ENCODE measurements at regions of chr7 and their contacts with region 1.

Region 1: DNA sequence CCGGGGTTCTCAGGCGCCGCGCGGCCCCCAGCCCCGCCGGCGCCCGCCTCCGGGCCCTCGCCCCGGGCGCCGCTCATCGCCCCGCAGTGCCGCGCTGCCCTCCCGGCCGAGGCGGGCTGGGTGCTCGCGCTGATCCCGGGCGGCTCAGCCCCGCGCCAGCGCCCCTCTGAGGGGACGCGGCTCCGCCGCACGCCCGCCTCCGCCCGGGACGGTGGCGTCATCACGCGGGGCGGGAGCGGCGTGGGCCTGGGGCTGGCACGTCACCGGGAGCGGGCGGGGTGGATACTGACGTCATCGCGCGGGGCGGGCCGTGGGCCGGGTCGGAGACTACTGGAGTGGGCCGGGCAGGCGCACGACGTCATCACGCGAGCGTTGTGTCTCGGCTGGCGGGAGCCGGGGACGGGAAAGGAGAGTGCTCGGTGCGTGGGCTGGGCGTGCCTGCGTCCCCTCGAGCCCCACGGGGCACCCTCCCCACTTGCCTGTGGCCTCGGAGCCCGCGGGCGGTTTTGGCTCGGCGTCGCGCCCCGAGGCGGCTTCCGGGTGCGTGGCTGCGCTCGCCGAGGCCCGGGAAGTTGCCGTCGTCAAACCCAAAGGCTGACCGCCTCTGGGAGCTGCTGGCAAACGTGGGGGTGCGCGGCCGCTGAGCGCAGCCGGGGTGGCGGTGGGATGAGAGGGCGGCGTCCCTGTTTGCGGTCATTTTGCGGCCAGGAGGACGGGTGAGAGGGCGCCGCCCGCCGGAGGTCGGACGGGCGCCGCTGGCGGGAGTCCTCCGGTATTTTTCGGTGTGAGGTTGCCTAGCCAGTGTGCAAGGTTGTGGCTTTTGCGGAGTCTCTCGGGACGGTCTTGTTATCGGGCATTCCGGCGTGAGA is at the start of gene ESYT2:
- DNase-seq: peak; percentile 98 to 100 (median 99)
- ATAC-seq: peak; percentile 74
- H3K4me3 ChIP-seq: peak within 1 kb of the TSS; percentile 70 to 75
- H3K4me3 Mint-ChIP-seq: peak within 1 kb of the TSS; percentile 94
- H3K27ac ChIP-seq: peak within 1 kb of the TSS; percentile 93 to 97
- H3K27ac Mint-ChIP-seq: peak within 1 kb of the TSS; percentile 95
- H3K4me1 ChIP-seq: peaks cover 32% of the 10 kb centered on the region
- H3K4me1 Mint-ChIP-seq: peaks cover 37% of the 10 kb centered on the region
- H3K27me3 ChIP-seq: no peaks in the 10 kb centered on the region
- H3K27me3 Mint-ChIP-seq: no peaks in the 10 kb centered on the region
- CTCF ChIP-seq: no peak
- total RNA-seq, gene ESYT2: 76.8 to 84.4 TPM

Region 2: DNA sequence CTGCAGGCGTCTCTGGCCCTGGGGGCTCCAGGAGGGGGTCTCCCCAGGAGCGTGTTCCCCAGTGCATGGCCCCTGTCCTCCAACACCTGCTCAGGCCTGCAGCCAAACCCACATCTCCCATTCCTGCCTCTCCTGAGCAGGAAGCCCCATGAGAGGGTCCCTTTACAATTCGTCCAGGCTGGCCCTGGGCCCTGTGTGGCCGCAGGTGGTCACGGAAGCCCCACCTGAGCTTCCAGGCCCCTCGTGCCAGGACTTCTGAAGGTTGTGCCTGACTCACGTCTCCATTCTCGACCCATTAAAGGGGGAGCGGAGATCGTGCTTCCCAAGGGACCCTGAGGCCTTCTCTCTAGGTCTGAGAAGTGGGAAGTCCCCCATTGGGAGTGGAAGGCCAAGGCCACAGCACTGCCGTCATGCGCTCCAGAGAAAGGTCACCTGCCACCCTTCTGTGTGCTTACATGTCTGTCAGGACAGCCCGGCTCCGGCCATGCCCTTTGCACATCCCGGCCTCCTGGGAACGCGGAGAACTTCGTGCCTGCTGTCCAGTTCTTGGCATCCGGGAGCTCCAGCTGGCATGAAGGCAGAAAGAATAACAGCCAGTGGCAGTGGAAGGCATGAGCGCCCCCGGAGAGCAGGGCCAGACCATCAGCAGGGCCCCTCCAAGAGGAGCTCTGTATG is 1110.4 kb before region 1 on chr7:
- CTCF ChIA-PET with region 1: no interaction called
- POLR2A ChIA-PET with region 1: no interaction called
- intact Hi-C with region 1: no loop called
- DNase-seq: no peak
- ATAC-seq: no peak
- H3K4me3 ChIP-seq: no peak overlapping the region
- H3K4me3 Mint-ChIP-seq: no peak overlapping the region
- H3K27ac ChIP-seq: no peak overlapping the region
- H3K27ac Mint-ChIP-seq: no peak overlapping the region
- H3K4me1 ChIP-seq: no peaks in the 10 kb centered on the region
- H3K4me1 Mint-ChIP-seq: no peaks in the 10 kb centered on the region
- H3K27me3 ChIP-seq: no peaks in the 10 kb centered on the region
- H3K27me3 Mint-ChIP-seq: peaks cover 16% of the 10 kb centered on the region
- CTCF ChIP-seq: no peak

Region 3: GRCh38 chr7:158760936-158761335 is 68.6 kb before region 1 on chr7:
- CTCF ChIA-PET with region 1: interaction called, 4 read pairs
- POLR2A ChIA-PET with region 1: interaction called, 4 read pairs
- intact Hi-C with region 1: loop called in 1 of 2 experiments (anchors 1 kb)
- DNase-seq: peak in 3 of 9 experiments; percentile 30 to 51 (median 39)
- ATAC-seq: peak; percentile 61
- H3K4me3 ChIP-seq: no peak overlapping the region
- H3K4me3 Mint-ChIP-seq: no peak overlapping the region
- H3K27ac ChIP-seq: no peak overlapping the region
- H3K27ac Mint-ChIP-seq: peak overlapping the region; percentile 60
- H3K4me1 ChIP-seq: no peaks in the 10 kb centered on the region
- H3K4me1 Mint-ChIP-seq: peaks cover 6% of the 10 kb centered on the region
- H3K27me3 ChIP-seq: no peaks in the 10 kb centered on the region
- H3K27me3 Mint-ChIP-seq: no peaks in the 10 kb centered on the region
- CTCF ChIP-seq: peak; percentile 17

Region 4: GRCh38 chr7:158789842-158790241 is 39.7 kb before region 1 on chr7:
- CTCF ChIA-PET with region 1: interaction called, 3 read pairs
- POLR2A ChIA-PET with region 1: no interaction called
- intact Hi-C with region 1: loop called in 1 of 2 experiments (anchors 2 kb)
- DNase-seq: no peak
- ATAC-seq: no peak
- H3K4me3 ChIP-seq: no peak overlapping the region
- H3K4me3 Mint-ChIP-seq: no peak overlapping the region
- H3K27ac ChIP-seq: no peak overlapping the region
- H3K27ac Mint-ChIP-seq: no peak overlapping the region
- H3K4me1 ChIP-seq: no peaks in the 10 kb centered on the region
- H3K4me1 Mint-ChIP-seq: peaks cover 2% of the 10 kb centered on the region
- H3K27me3 ChIP-seq: no peaks in the 10 kb centered on the region
- H3K27me3 Mint-ChIP-seq: no peaks in the 10 kb centered on the region
- CTCF ChIP-seq: no peak

Region 5: GRCh38 chr7:158818325-158819213 is 11.0 kb before region 1 on chr7:
- CTCF ChIA-PET with region 1: interaction called, 5 read pairs
- POLR2A ChIA-PET with region 1: interaction called, 32 read pairs
- intact Hi-C with region 1: loop called (anchors 1 kb)
- DNase-seq: peak; percentile 49 to 94 (median 67)
- ATAC-seq: peak; percentile 65
- H3K4me3 ChIP-seq: peak overlapping the region; percentile 41 to 47
- H3K4me3 Mint-ChIP-seq: peak overlapping the region; percentile 85
- H3K27ac ChIP-seq: peak overlapping the region; percentile 78 to 92
- H3K27ac Mint-ChIP-seq: peak overlapping the region; percentile 97
- H3K4me1 ChIP-seq: peaks cover 96% of the 10 kb centered on the region
- H3K4me1 Mint-ChIP-seq: peaks cover 89% of the 10 kb centered on the region
- H3K27me3 ChIP-seq: no peaks in the 10 kb centered on the region
- H3K27me3 Mint-ChIP-seq: no peaks in the 10 kb centered on the region
- CTCF ChIP-seq: no peak

Region 6: GRCh38 chr7:158856883-158857668 is 27.5 kb after region 1 on chr7:
- CTCF ChIA-PET with region 1: interaction called, 3 read pairs
- POLR2A ChIA-PET with region 1: interaction called, 7 read pairs
- intact Hi-C with region 1: loop called (anchors 1 kb)
- DNase-seq: no peak
- ATAC-seq: no peak
- H3K4me3 ChIP-seq: peak overlapping the region; percentile 61 to 64
- H3K4me3 Mint-ChIP-seq: peak overlapping the region; percentile 96
- H3K27ac ChIP-seq: peak overlapping the region; percentile 17 to 68
- H3K27ac Mint-ChIP-seq: peak overlapping the region; percentile 80
- H3K4me1 ChIP-seq: peaks cover 10% of the 10 kb centered on the region
- H3K4me1 Mint-ChIP-seq: peaks cover 31% of the 10 kb centered on the region
- H3K27me3 ChIP-seq: no peaks in the 10 kb centered on the region
- H3K27me3 Mint-ChIP-seq: no peaks in the 10 kb centered on the region
- CTCF ChIP-seq: no peak